ENCODE measurements at regions of chr15 and their contacts with region 1.

Region 1: GRCh38 chr15:62306851-62307504 is 141.9 kb upstream of the C2CD4B start:
- DNase-seq: peak in 4 of 5 donors; percentile 41 to 69 (median 58)
- ATAC-seq: peak; percentile 82 to 94 (median 90)
- H3K4me3 ChIP-seq: no peak overlapping the region
- H3K27ac ChIP-seq: no peak overlapping the region
- H3K4me1 ChIP-seq: peaks cover 0 to 17% (median 7%) of the 10 kb centered on the region in 12 donors
- H3K27me3 ChIP-seq: no peaks in the 10 kb centered on the region
- CTCF ChIP-seq: peak; percentile 50 to 79 (median 66)
- POLR2A ChIP-seq: no peak

Region 2: DNA sequence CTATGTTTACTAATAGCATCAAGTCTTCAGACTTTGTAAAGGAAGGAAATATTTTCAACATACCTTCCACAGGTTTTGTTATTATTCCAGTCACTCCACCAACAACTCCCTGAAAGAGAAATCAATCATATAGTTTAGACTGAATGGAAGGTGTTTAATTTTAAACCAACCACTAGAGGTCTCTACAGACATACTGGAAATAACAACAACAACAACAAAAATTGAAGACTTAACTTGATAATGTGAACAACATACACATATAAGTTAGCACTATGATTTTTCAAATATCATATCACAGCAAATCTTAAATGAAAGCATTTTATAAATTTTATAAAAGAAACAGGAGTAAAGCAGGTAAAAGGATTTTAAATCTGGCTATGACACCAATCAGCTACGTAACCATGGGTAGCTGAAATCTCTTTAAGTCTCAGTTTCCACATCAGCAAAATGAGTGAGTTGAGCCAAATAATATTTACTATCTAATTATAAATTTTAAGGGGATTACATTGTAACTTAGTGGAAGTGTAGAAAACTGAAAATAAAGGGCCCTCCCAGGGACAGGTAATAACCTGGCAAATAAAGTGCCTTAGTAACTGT is 435.0 kb before region 1 on chr15:
- intact Hi-C with region 1: loop called in 7 of 10 experiments (anchors 5 to 10 kb)
- DNase-seq: no peak
- ATAC-seq: no peak
- H3K4me3 ChIP-seq: no peak overlapping the region
- H3K27ac ChIP-seq: no peak overlapping the region
- H3K4me1 ChIP-seq: no peaks in the 10 kb centered on the region
- H3K27me3 ChIP-seq: no peaks in the 10 kb centered on the region
- CTCF ChIP-seq: peak; percentile 35 to 67 (median 50)
- POLR2A ChIP-seq: no peak

Region 3: DNA sequence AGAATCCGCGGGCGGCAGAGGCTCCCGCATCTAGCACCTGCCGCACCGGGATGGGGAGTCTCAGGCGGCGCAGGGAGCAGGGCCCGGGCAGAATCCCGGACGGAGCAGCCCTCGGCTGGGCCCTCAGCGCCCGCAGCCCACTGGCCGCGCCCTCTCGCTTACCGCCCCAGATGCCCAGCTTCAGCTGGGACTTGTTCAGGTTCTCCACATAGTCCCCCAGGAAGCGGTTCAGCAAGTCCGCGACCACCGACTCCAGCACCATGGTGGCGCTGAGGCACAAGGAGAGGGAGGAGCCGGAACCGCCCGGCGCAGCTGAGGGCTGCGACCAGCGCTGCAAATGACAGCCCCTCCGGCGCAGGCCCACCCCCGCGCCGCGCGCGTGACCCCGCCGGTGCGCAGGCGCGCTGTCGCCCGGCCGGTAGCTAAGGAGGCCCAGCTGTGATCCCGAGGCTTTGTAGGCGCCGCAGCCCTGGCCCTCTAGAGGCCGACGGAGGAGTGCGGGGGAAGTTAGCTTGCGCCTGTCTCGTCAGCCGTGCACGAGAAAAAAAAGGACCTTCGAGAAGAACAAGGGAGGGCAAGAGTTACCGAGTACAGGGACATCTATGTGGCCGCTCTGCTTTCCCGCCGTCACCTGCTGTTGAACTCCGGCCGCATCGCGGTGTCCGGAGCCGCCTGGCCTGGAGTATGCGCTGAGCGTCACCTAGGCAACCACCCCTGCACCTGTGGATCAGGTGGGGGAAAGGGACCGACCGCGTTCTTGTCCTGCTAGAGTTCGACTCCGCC is 246.7 kb before region 1 on chr15 and contains the start of gene VPS13C:
- intact Hi-C with region 1: loop called in 1 of 10 experiments (anchors 10 kb)
- DNase-seq: peak; percentile 93 to 96 (median 94)
- ATAC-seq: peak; percentile 99
- H3K4me3 ChIP-seq: peak within 1 kb of the TSS; percentile 62 to 99 (median 92)
- H3K27ac ChIP-seq: peak within 1 kb of the TSS; percentile 62 to 99 (median 88)
- H3K4me1 ChIP-seq: peaks cover 0 to 41% (median 14%) of the 10 kb centered on the region in 12 donors
- H3K27me3 ChIP-seq: no peaks in the 10 kb centered on the region
- CTCF ChIP-seq: peak; percentile 48 to 94 (median 76)
- POLR2A ChIP-seq: peak in 1 of 2 donors; percentile 83
- total RNA-seq, gene VPS13C: 29.7 to 70.1 (median 39.4) TPM

Region 4: GRCh38 chr15:63514531-63514943 is 1207.6 kb after region 1 on chr15:
- intact Hi-C with region 1: no loop called
- DNase-seq: no peak
- ATAC-seq: no peak
- H3K4me3 ChIP-seq: no peak overlapping the region
- H3K27ac ChIP-seq: peak overlapping the region in 1 of 12 donors; percentile 9
- H3K4me1 ChIP-seq: peaks cover 0 to 92% (median 56%) of the 10 kb centered on the region in 12 donors
- H3K27me3 ChIP-seq: no peaks in the 10 kb centered on the region
- CTCF ChIP-seq: no peak
- POLR2A ChIP-seq: no peak